Activated CD8-positive, alpha-beta T cell treated with anti-CD3 and anti-CD28 coated beads, Interleukin-2, amount 10 ng/mL, durations not matched to agents 7 days and 5 days (primary cell): ENCODE measurements at regions of chr22 and their contacts with region 1.

Region 1: DNA sequence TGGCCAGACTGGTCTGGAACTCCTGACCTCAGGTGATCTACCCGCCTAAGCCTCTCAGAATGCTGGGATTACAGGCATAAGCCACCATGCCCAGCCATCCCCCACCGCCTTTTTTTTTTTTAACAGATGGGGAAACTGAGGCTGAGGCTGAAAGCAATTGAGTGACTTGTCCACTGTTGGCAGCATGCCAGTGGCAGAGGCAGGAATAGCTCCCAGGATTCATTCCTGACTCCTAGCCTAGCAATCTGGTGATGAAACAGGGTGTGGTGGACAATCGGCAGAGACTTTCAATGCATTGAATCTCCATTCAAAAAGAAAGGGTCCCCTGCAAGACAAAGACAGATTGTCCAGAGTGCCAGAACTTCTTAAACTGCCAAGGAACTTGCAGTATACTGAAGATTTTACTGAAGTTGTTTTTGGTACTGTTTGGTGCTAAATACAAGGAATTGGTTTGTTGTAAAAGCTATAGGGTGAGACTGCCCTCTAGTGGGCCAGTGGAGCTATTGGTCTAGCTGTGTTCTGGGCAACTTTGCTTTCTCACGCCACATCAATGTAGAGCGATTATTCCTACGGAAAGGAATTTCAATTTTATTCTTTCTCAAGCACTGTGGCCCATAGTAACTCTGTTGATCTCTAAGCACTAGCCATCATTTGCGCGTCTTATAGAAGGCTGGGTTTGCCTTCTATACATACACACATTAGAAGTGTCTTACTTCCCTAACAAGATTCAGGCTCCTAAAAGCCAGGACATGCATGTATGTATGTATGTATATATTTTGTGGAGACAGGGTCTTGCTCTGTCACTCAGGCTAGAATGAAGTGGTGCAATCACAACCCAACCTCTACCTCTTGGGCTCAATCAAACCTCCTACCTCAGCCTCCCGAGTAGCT is 21.0 kb downstream of the C22orf31 start:
- DNase-seq: peak; percentile 81
- ATAC-seq: peak; percentile 84
- H3K4me3 Mint-ChIP-seq: no peak overlapping the region
- H3K27ac Mint-ChIP-seq: no peak overlapping the region
- H3K4me1 Mint-ChIP-seq: peaks cover 13% of the 10 kb centered on the region
- H3K27me3 Mint-ChIP-seq: peaks cover 11% of the 10 kb centered on the region

Region 2: GRCh38 chr22:28791841-28792490 is 248.7 kb before region 1 on chr22:
- CTCF ChIA-PET with region 1: interaction called, 13 read pairs
- POLR2A ChIA-PET with region 1: no interaction called
- DNase-seq: no peak
- ATAC-seq: peak; percentile 54
- H3K4me3 Mint-ChIP-seq: peak overlapping the region; percentile 26
- H3K27ac Mint-ChIP-seq: peak overlapping the region; percentile 84
- H3K4me1 Mint-ChIP-seq: peaks cover 64% of the 10 kb centered on the region
- H3K27me3 Mint-ChIP-seq: no peaks in the 10 kb centered on the region

Region 3: DNA sequence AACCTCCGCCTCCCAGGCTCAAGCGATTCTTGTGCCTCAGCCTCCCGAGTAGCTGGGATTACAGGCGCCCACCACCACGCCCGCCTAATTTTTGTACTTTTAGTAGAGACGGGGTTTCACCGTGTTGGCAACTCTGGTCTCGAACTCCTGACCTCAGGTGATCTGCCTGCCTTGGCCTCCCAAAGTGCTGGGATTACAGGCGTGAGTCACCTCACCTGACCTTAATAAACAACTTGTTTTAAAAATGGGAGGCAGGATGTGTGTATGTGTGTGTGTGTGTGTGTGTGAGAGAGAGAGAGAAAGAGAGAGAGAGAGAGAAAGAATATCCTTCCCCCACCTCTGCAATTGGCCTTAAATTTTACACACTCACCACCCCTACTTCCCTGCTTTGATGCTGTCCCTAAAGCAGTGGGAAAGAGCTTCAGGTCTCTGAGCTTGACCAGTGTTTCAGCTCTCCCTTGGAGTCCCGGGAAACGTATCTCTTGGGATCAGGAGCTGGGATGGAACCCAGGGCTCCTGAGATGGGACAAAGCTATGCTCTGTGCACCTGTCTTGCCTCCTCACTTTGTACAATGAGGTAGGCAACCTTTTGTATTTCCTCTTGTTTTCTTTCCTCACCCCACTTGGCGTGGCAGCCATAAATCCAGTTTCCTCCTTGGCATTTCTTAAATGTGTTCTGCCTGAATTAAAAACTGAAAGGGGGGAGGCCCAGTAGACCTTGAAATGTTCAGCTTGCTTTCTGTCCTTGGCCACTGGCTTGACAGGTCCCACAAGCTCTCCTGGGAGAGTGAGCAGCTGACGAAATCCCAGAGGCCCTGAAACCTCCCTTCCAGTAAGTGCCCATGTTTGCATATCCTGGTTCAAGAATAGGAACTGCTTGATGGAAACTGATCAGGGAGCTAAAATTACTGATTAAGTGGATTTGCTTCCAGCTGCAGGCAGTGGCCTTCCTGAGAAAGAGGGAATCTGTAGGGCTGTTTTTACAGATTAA is 222.4 kb before region 1 on chr22:
- CTCF ChIA-PET with region 1: no interaction called
- POLR2A ChIA-PET with region 1: no interaction called
- DNase-seq: peak; percentile 39
- ATAC-seq: no peak
- H3K4me3 Mint-ChIP-seq: no peak overlapping the region
- H3K27ac Mint-ChIP-seq: peak overlapping the region; percentile 81
- H3K4me1 Mint-ChIP-seq: peaks cover 82% of the 10 kb centered on the region
- H3K27me3 Mint-ChIP-seq: no peaks in the 10 kb centered on the region

Region 4: DNA sequence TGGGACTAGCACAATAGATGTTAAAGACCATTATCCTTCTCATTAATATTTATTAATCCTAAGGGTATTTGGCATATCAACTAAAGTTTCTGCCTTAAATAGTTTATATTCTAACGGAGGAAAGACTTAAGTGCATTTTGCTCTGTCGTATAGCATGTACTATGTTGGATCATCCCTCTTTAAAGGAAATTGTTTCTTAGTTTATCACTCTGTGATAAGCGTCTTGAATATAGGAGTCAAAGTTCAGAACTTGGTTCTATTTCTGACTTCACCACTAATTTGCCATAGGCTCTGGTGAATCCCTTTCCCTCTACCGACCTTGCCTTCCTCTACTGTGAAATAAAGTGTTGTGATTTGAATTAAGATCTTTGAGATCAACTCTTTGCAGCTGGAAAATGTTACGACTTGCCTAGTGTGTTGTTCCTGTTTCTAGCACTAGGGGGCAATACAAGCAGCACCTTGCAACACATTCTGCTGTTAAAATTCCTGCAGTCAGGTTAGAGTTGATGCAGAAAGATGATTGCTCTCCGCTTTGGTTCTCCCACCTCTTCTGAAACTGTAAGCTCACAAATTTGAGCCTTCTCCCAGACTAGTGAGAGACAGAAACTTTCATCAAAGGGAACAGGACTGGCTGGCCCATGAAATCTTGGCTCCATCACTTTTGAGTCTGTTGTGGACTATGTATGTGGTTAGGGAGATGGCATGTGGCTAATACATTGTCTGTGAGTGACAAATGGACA is 185.1 kb before region 1 on chr22:
- CTCF ChIA-PET with region 1: interaction called, 95 read pairs
- POLR2A ChIA-PET with region 1: interaction called, 3 read pairs
- DNase-seq: peak; percentile 65
- ATAC-seq: peak; percentile 39
- H3K4me3 Mint-ChIP-seq: no peak overlapping the region
- H3K27ac Mint-ChIP-seq: no peak overlapping the region
- H3K4me1 Mint-ChIP-seq: no peaks in the 10 kb centered on the region
- H3K27me3 Mint-ChIP-seq: peaks cover 8% of the 10 kb centered on the region

Region 5: GRCh38 chr22:29030016-29030622 is 10.5 kb before region 1 on chr22:
- CTCF ChIA-PET with region 1: interaction called, 13 read pairs
- POLR2A ChIA-PET with region 1: no interaction called
- DNase-seq: peak; percentile 28
- ATAC-seq: peak; percentile 40
- H3K4me3 Mint-ChIP-seq: peak overlapping the region; percentile 32
- H3K27ac Mint-ChIP-seq: no peak overlapping the region
- H3K4me1 Mint-ChIP-seq: peaks cover 19% of the 10 kb centered on the region
- H3K27me3 Mint-ChIP-seq: peaks cover 50% of the 10 kb centered on the region